CD4-positive, alpha-beta memory T cell (primary cell): ENCODE measurements at regions of chr16 and their contacts with region 1.

Region 1: GRCh38 chr16:58684354-58685083 is at the start of gene SLC38A7:
- DNase-seq: peak; percentile 58 to 70 (median 60)
- H3K4me3 ChIP-seq: peak within 1 kb of the TSS; percentile 46 to 82
- H3K4me3 Mint-ChIP-seq: peak within 1 kb of the TSS; percentile 88 to 93 (median 92)
- H3K27ac ChIP-seq: peak within 1 kb of the TSS; percentile 55
- H3K27ac Mint-ChIP-seq: peak within 1 kb of the TSS; percentile 38 to 91 (median 89)
- H3K4me1 ChIP-seq: peaks cover 20% of the 10 kb centered on the region
- H3K4me1 Mint-ChIP-seq: peaks cover 11 to 22% (median 18%) of the 10 kb centered on the region in 4 donors
- H3K27me3 ChIP-seq: no peaks in the 10 kb centered on the region
- H3K27me3 Mint-ChIP-seq: peaks cover under 1% of the 10 kb centered on the region in 2 donors
- total RNA-seq, gene SLC38A7: 11.4 to 13.8 TPM

Region 2: DNA sequence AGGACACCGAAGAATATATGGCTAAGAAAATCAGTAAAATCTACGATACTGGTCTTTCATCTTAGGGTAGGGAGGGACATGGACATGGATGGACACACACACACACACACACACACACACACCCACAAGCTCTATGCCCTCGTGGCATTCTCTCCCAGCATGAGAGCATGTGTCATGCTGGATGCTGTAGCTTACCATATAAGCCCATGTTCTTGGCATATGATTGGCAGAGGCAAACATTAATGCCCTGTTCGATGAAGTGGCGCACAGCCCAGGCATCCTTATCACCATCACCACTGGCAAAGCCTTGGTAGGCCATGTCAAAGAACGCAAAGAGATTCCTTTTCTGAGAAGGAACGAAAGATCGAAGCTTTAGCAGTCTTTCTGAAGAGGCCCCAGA is 31.9 kb after region 1 on chr16:
- CTCF ChIA-PET with region 1: no interaction called
- POLR2A ChIA-PET with region 1: no interaction called
- intact Hi-C with region 1: no loop called
- DNase-seq: no peak
- H3K4me3 ChIP-seq: no peak overlapping the region
- H3K4me3 Mint-ChIP-seq: no peak overlapping the region
- H3K27ac ChIP-seq: no peak overlapping the region
- H3K27ac Mint-ChIP-seq: no peak overlapping the region
- H3K4me1 ChIP-seq: no peaks in the 10 kb centered on the region
- H3K4me1 Mint-ChIP-seq: no peaks in the 10 kb centered on the region
- H3K27me3 ChIP-seq: no peaks in the 10 kb centered on the region
- H3K27me3 Mint-ChIP-seq: no peaks in the 10 kb centered on the region

Region 3: GRCh38 chr16:58733671-58734458 is 49.3 kb after region 1 on chr16 and contains the start of gene GOT2:
- CTCF ChIA-PET with region 1: no interaction called
- POLR2A ChIA-PET with region 1: interaction called, 3 read pairs
- intact Hi-C with region 1: loop called (anchors 1 kb)
- DNase-seq: peak; percentile 70 to 81 (median 77)
- H3K4me3 ChIP-seq: peak within 1 kb of the TSS; percentile 85 to 86
- H3K4me3 Mint-ChIP-seq: peak within 1 kb of the TSS; percentile 94 to 99 (median 98)
- H3K27ac ChIP-seq: peak within 1 kb of the TSS; percentile 72
- H3K27ac Mint-ChIP-seq: peak within 1 kb of the TSS; percentile 57 to 97 (median 94)
- H3K4me1 ChIP-seq: peaks cover 37% of the 10 kb centered on the region
- H3K4me1 Mint-ChIP-seq: peaks cover 24 to 45% (median 35%) of the 10 kb centered on the region in 4 donors
- H3K27me3 ChIP-seq: no peaks in the 10 kb centered on the region
- H3K27me3 Mint-ChIP-seq: no peaks in the 10 kb centered on the region
- total RNA-seq, gene GOT2: 37.1 to 42.4 TPM